Natural killer cell (primary cell): ENCODE measurements at regions of chr12 and their contacts with region 1.

Region 1: DNA sequence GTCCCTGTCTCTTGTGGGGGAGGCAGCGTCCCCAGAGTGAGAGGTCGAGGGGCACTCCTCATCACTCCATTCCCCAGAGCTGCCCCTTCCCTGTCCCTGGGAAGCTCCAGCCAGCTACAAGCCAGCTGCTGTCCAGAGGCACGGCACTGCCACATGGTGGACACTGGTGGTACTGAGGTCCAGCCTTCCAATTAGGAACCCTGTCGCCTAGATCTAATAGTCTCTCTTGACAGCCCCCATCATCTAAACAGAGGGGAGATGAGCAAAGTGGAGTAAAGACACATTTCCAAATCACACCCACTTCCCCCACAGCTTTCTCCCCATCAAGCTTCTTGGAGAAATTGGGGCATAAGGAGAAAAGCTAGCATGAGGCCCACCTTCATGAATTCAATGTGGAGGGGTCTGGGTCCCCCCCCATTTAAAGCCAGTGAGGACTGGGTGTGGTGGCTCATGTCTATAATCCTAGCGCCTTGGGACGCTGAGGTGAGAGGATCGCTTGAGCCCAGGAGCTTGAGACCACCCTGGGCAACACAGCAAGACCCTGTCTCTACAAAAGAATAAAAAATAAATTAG is 2.1 kb upstream of the INHBE start:
- DNase-seq: peak; percentile 53 to 68
- ATAC-seq: peak; percentile 75 to 86 (median 84)
- H3K4me3 ChIP-seq: no peak overlapping the region
- H3K4me3 Mint-ChIP-seq: no peak overlapping the region
- H3K27ac ChIP-seq: no peak overlapping the region
- H3K27ac Mint-ChIP-seq: no peak overlapping the region
- H3K4me1 ChIP-seq: peaks cover 5% of the 10 kb centered on the region
- H3K4me1 Mint-ChIP-seq: peaks cover 5 to 10% of the 10 kb centered on the region in 2 donors
- H3K27me3 ChIP-seq: no peaks in the 10 kb centered on the region
- H3K27me3 Mint-ChIP-seq: no peaks in the 10 kb centered on the region
- CTCF ChIP-seq: peak; percentile 70

Region 2: DNA sequence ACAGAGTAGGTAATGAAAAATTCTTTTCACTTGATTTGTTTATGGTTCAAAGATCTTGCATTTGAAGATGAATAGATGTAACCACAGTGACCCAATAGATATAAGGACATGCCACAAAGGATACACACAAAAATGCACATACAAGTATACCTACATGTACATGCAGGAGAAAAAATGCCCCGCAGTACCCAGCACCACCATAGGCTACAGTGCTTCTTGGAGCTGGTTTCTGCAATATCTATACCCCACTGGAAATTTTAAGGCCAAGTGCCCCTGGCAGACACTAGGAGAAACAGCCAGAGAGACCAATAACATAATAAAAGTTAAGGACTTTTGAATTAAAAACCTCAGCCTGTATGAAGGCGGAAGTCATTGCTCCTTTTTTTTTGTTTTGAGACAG is 189.9 kb before region 1 on chr12:
- intact Hi-C with region 1: loop called (anchors 1 kb)
- DNase-seq: no peak
- ATAC-seq: no peak
- H3K4me3 ChIP-seq: no peak overlapping the region
- H3K4me3 Mint-ChIP-seq: no peak overlapping the region
- H3K27ac ChIP-seq: no peak overlapping the region
- H3K27ac Mint-ChIP-seq: no peak overlapping the region
- H3K4me1 ChIP-seq: peaks cover 6% of the 10 kb centered on the region
- H3K4me1 Mint-ChIP-seq: peaks cover 4% of the 10 kb centered on the region in 2 donors
- H3K27me3 ChIP-seq: no peaks in the 10 kb centered on the region
- H3K27me3 Mint-ChIP-seq: no peaks in the 10 kb centered on the region
- CTCF ChIP-seq: no peak

Region 3: GRCh38 chr12:57309420-57309819 is 143.6 kb before region 1 on chr12:
- intact Hi-C with region 1: loop called (anchors 1 kb)
- DNase-seq: no peak
- ATAC-seq: no peak
- H3K4me3 ChIP-seq: no peak overlapping the region
- H3K4me3 Mint-ChIP-seq: no peak overlapping the region
- H3K27ac ChIP-seq: no peak overlapping the region
- H3K27ac Mint-ChIP-seq: no peak overlapping the region
- H3K4me1 ChIP-seq: no peaks in the 10 kb centered on the region
- H3K4me1 Mint-ChIP-seq: peaks cover 0 to 5% of the 10 kb centered on the region in 2 donors
- H3K27me3 ChIP-seq: no peaks in the 10 kb centered on the region
- H3K27me3 Mint-ChIP-seq: no peaks in the 10 kb centered on the region
- CTCF ChIP-seq: no peak